Esophagus muscularis mucosa (tissue), 4 donors: ENCODE measurements at regions of chr3 and their contacts with region 1.

Region 1: DNA sequence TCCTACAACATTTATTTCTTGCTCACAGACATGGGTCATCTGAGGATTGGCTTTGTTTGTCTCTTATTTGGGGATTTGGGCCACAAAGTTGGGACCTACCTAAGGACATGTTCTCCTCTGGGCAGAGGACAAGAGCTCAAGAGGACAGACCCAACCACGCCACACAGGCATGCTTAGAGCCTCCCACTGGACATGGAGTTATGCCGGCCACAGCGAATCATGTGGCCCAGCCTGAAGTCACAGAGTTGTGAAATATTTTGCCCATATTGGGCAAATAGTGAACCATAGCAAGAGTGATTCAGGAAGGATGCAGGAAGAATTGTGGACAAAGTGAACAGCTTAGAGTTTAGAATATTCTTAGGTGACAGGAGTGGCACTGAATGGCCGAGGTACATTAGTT is 9.9 kb downstream of the TRAK1 start:
- DNase-seq: no peak
- H3K4me3 ChIP-seq: no peak overlapping the region
- H3K27ac ChIP-seq: peak overlapping the region; percentile 43 to 74 (median 58)
- H3K4me1 ChIP-seq: peaks cover 65 to 74% (median 70%) of the 10 kb centered on the region in 4 donors
- H3K27me3 ChIP-seq: no peaks in the 10 kb centered on the region
- CTCF ChIP-seq: no peak
- EP300 ChIP-seq: no peak
- POLR2A ChIP-seq: no peak

Region 2: DNA sequence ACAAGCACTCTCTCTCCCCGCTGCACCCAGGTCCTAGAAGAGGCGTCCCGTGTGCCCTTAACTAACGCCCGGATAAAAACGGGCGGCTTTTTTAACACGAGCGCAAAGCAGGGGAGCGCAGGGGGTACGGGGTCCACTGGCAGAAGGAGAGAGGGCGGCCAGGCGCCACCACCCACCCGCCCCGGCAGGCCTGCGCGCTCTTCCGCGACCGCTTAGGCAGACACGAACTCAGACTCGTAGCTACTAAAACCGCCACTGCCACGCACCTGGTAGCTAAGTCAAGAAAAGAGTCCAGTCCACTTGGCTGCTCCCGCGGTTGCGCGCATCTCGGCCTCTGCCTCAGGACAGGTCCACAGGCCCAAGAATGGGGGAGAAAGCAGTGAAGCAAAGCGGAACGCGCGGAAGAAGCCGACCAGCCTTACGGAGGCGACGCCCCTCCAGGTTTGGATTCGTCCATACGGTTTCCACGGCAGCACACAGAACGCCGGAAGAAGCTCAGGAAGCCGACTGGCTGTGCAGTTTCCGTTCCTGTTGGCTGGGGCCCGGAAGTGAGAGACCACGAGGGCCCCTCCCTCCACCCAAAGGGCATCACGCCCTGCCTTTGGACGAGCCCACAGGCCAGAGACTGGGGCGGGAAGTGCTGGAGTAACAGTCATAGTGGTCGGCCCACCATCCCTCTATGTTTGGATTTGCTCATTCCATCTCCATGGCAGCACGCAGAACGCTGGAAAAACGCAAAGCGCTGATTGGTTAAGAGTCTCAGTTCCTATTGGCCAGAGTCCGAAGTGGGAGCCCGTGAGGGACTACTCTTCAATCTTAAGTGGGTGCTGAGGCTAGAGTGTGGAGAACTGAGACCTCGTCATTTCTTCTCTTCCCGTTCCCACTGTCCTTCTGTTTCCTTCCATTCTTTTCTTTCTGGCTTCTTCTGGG is 139.0 kb before region 1 on chr3 and contains the start of gene ULK4:
- intact Hi-C with region 1: loop called (anchors 5 kb)
- DNase-seq: peak; percentile 99
- H3K4me3 ChIP-seq: peak within 1 kb of the TSS; percentile 80 to 95 (median 92)
- H3K27ac ChIP-seq: peak within 1 kb of the TSS; percentile 82 to 94 (median 90)
- H3K4me1 ChIP-seq: peaks cover 10 to 20% (median 13%) of the 10 kb centered on the region in 4 donors
- H3K27me3 ChIP-seq: no peaks in the 10 kb centered on the region
- CTCF ChIP-seq: no peak
- EP300 ChIP-seq: no peak
- POLR2A ChIP-seq: peak; percentile 11
- total RNA-seq, gene ULK4: 4.2 to 15.4 (median 11.0) TPM

Region 3: GRCh38 chr3:42012935-42013690 is 87.9 kb before region 1 on chr3:
- intact Hi-C with region 1: loop called (anchors 5 kb)
- DNase-seq: no peak
- H3K4me3 ChIP-seq: peak overlapping the region; percentile 89 to 97 (median 94)
- H3K27ac ChIP-seq: peak overlapping the region; percentile 84 to 95 (median 91)
- H3K4me1 ChIP-seq: peaks cover 32 to 48% (median 44%) of the 10 kb centered on the region in 4 donors
- H3K27me3 ChIP-seq: no peaks in the 10 kb centered on the region
- CTCF ChIP-seq: peak in 1 of 3 experiments; percentile 20
- EP300 ChIP-seq: no peak
- POLR2A ChIP-seq: no peak

Region 4: DNA sequence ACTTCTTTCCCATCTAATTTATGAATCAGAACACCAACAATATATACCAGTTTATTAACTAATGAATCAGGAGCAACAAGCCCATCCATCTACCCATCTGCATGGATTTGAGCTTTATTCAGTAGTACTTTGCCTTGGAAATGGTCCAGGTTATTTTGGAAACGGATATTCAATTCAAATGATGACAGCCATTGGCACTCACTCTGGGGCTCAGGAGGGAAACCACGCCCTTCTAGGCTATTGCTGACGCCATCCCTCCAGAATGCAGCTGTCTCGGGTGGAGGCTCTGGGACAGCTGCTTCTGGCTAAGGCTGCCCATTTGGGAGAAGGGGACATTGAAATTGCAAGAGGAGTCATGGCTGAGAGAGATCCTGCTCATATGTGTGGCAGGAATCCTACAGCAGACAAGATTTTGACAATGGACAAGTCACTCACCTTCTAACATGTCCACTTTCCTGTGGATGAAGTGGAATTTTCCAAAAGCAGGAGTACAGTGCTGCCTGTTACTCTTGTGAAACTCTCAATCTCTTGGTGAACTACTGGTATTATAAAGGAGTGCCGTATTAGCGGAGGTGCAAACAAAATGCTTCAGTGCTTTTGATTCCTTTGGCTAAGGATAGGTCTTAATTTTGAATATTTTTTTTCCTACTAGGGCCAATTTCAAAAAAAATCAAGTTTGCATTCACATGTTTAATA is 39.2 kb before region 1 on chr3:
- intact Hi-C with region 1: no loop called
- DNase-seq: no peak
- H3K4me3 ChIP-seq: peak overlapping the region in 3 of 4 donors; percentile 15 to 38 (median 26)
- H3K27ac ChIP-seq: peak overlapping the region; percentile 80 to 88 (median 84)
- H3K4me1 ChIP-seq: peaks cover 79 to 95% (median 85%) of the 10 kb centered on the region in 4 donors
- H3K27me3 ChIP-seq: no peaks in the 10 kb centered on the region
- CTCF ChIP-seq: no peak
- EP300 ChIP-seq: peak; percentile 2
- POLR2A ChIP-seq: no peak